ENCODE measurements at regions of chr2 and their contacts with region 1.

Region 1: GRCh38 chr2:37877457-37878315 is 47.4 kb upstream of the RMDN2 start:
- DNase-seq: no peak
- ATAC-seq: peak; percentile 57
- H3K4me3 Mint-ChIP-seq: no peak overlapping the region
- H3K27ac Mint-ChIP-seq: no peak overlapping the region
- H3K4me1 Mint-ChIP-seq: peaks cover 3% of the 10 kb centered on the region
- H3K27me3 Mint-ChIP-seq: peaks cover 21% of the 10 kb centered on the region
- CTCF ChIP-seq: peak; percentile 76

Region 2: GRCh38 chr2:37168217-37168981 is 709.3 kb before region 1 on chr2:
- CTCF ChIA-PET with region 1: interaction called, 23 read pairs
- POLR2A ChIA-PET with region 1: no interaction called
- intact Hi-C with region 1: loop called (anchors 1 kb)
- DNase-seq: no peak
- ATAC-seq: peak; percentile 86
- H3K4me3 Mint-ChIP-seq: no peak overlapping the region
- H3K27ac Mint-ChIP-seq: no peak overlapping the region
- H3K4me1 Mint-ChIP-seq: no peaks in the 10 kb centered on the region
- H3K27me3 Mint-ChIP-seq: no peaks in the 10 kb centered on the region
- CTCF ChIP-seq: no peak

Region 3: GRCh38 chr2:37287966-37288365 is 589.7 kb before region 1 on chr2:
- CTCF ChIA-PET with region 1: no interaction called
- POLR2A ChIA-PET with region 1: no interaction called
- intact Hi-C with region 1: loop called (anchors 1 kb)
- DNase-seq: no peak
- ATAC-seq: no peak
- H3K4me3 Mint-ChIP-seq: no peak overlapping the region
- H3K27ac Mint-ChIP-seq: no peak overlapping the region
- H3K4me1 Mint-ChIP-seq: peaks cover 13% of the 10 kb centered on the region
- H3K27me3 Mint-ChIP-seq: no peaks in the 10 kb centered on the region
- CTCF ChIP-seq: no peak